CD8-positive, alpha-beta T cell (primary cell): ENCODE measurements at regions of chr4 and their contacts with region 1.

Region 1: DNA sequence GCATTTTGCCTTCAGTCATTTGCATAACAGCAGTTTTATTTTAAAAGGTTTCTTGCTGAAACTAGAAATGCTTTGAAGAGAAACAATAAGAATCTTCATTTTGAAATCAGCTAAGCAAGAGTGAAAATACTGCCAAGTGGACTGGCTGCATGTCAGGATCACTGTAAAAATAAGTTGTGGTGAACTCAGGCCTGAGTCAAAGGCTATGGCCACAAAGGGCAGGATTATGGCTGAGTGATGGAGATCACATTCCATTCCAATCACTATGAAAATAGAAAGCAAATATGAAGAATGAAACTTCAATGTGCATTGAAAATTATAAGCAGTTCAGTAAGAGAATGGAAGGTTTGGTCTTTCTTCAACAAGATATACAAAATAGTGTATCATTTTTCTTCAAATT is 224.5 kb downstream of the PCDH18 start:
- DNase-seq: no peak
- ATAC-seq: no peak
- H3K4me3 ChIP-seq: no peak overlapping the region
- H3K4me3 Mint-ChIP-seq: no peak overlapping the region
- H3K27ac ChIP-seq: no peak overlapping the region
- H3K27ac Mint-ChIP-seq: no peak overlapping the region
- H3K4me1 ChIP-seq: no peaks in the 10 kb centered on the region
- H3K4me1 Mint-ChIP-seq: no peaks in the 10 kb centered on the region
- H3K27me3 ChIP-seq: no peaks in the 10 kb centered on the region
- H3K27me3 Mint-ChIP-seq: no peaks in the 10 kb centered on the region
- CTCF ChIP-seq: no peak

Region 2: DNA sequence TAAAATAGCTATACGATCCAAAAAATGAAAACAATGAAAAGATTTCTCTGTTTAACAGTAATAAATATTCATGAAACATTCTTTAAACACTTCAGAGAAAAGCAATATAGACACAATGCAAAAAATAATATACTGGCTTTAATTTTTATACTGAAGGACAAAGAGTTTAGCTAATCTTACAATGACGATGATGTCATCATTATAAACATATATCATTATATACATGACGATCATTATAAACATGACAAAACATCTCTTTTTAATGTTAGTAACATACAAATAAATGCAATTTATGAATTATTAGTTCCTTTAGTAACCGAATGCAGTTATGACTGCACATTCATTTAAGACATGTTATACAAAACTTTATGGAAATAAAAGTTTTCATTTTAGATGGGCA is 1210.1 kb before region 1 on chr4:
- CTCF ChIA-PET with region 1: no interaction called
- POLR2A ChIA-PET with region 1: no interaction called
- intact Hi-C with region 1: loop called in 1 of 2 experiments (anchors 5 kb)
- DNase-seq: no peak
- ATAC-seq: no peak
- H3K4me3 ChIP-seq: no peak overlapping the region
- H3K4me3 Mint-ChIP-seq: no peak overlapping the region
- H3K27ac ChIP-seq: no peak overlapping the region
- H3K27ac Mint-ChIP-seq: no peak overlapping the region
- H3K4me1 ChIP-seq: no peaks in the 10 kb centered on the region
- H3K4me1 Mint-ChIP-seq: no peaks in the 10 kb centered on the region
- H3K27me3 ChIP-seq: no peaks in the 10 kb centered on the region
- H3K27me3 Mint-ChIP-seq: no peaks in the 10 kb centered on the region
- CTCF ChIP-seq: no peak